Activated CD8-positive, alpha-beta T cell treated with anti-CD3 and anti-CD28 coated beads, Interleukin-2, amount 10 ng/mL, durations not matched to agents 7 days and 5 days (primary cell): ENCODE measurements at regions of chr3 and their contacts with region 1.

Region 1: DNA sequence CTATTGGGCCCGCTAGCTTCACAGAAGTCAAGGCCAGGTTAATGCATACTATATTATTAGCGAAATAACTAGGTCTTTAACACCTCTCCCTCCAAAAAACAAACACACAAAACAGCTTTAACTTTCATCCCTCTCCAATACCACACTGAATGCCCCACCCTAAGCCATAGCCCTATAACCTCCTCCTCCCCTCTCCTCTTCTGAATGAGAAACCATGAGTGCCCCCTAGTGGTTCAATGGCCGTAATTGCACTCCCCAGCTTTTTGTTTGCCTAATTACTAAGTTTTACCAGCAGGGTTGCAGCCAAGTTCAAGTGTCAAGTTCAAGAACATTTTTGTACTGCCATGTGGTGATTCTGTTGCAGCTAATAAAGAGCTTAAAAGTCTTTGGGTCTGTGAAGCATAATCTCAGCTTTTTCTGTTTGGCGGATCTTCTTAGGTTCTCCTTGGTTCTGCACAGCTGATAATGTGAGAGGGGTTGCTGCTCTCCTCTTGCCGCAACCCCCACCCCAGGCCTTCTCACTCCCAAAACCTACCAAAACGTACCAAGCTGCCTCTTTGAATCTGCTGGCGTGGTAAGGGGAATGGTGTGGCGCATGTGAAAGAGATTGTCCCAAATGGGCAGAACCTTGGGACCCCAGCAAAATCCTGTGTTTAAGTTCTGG is 57.9 kb downstream of the RPL22L1 start:
- DNase-seq: peak; percentile 79
- ATAC-seq: peak; percentile 79
- H3K4me3 Mint-ChIP-seq: no peak overlapping the region
- H3K27ac Mint-ChIP-seq: no peak overlapping the region
- H3K4me1 Mint-ChIP-seq: peaks cover 2% of the 10 kb centered on the region
- H3K27me3 Mint-ChIP-seq: peaks cover 3% of the 10 kb centered on the region

Region 2: DNA sequence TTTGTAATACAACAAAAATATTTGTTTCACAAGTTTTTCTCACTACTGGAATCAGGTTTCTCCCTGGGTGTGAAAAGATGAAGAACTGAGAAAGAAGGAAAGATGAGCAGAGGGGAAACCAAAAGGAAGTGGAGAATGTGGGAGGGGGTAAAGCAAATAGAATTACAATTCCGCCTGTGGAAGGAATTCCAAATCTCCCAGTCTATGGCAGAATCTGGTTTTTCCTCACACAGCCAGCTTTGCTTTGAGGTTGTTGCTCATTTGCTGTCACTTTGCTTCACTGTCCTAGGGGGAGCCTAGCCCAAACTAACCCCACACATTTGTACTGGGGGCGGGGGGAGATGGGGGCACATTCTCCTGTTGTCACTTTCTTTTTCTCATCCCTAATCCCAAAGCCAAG is 14.0 kb after region 1 on chr3:
- CTCF ChIA-PET with region 1: interaction called, 10 read pairs
- POLR2A ChIA-PET with region 1: no interaction called
- DNase-seq: no peak
- ATAC-seq: no peak
- H3K4me3 Mint-ChIP-seq: no peak overlapping the region
- H3K27ac Mint-ChIP-seq: no peak overlapping the region
- H3K4me1 Mint-ChIP-seq: peaks cover 9% of the 10 kb centered on the region
- H3K27me3 Mint-ChIP-seq: peaks cover 18% of the 10 kb centered on the region